Body of pancreas (tissue), 4 donors: ENCODE measurements at regions of chr7 and their contacts with region 1.

Region 1: DNA sequence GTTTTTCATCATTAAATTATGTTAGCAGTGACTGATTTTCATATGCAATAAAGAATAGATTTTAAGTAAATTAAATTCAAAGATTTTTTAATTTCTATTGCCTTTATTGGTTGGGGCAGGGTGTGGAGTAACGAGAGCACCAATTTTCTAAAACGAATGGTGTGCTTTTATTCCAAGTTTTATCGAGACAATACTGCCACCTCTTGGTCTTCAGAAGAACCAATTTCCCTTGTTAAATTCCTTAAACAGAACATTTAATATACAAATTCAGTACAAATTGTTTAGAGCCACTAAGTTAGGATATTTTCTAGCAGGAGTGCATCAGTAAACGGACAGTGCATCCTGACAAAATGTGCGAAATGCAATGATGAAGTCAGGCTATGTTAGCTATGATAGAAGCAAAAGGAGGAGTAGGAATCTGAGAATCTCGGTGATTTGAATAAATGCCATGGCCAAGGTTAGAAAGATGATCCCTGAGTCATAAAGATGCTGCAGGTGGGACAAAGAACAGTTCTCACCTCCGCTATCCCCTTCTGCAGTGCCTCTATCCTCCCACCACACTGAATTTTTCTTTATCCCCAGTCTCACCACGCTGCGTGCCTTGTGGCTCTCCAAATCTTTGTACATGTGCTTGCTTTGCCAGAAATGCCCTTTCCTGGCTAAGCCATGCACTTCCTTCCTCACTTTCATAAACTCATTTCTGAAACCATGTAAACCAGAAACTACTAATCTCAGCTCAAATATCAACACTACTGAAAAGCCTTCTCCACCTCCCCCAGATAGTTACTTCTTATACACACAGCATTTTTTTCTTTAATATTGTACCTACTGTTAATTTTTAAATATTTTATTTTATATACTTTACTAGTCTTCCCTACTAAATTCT is 31.9 kb upstream of the AGBL3 start:
- DNase-seq: no peak
- ATAC-seq: no peak
- H3K4me3 ChIP-seq: no peak overlapping the region
- H3K27ac ChIP-seq: no peak overlapping the region
- H3K4me1 ChIP-seq: no peaks in the 10 kb centered on the region
- H3K27me3 ChIP-seq: no peaks in the 10 kb centered on the region
- CTCF ChIP-seq: peak; percentile 23 to 77 (median 68)
- POLR2A ChIP-seq: no peak

Region 2: DNA sequence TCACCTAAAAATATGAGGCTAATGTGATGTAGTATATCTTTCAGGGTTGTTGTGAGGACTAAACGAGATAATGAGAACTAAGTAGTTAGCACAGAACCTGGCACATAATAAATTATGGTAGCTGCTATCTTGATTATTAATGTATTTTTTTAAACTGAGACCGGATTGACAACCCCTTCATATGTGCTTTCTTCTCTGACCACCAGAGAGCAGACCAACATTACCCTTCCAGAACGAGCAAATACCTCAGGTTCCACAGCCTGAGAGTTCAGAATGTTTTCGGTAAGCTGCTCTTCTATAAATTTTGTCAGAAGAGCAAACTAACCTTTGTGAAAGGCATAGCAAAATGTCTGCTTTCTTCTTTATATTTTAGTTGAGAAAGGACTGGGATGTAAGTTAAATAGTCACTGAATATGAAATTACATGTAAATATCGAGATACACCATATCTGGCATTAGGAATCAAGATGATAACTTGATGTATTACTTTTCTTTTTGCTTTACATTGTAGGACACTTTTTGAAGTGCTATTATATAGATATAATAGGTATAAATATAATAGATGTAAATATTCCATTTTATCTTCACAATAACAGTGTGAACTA is 321.4 kb before region 1 on chr7:
- intact Hi-C with region 1: loop called (anchors 5 kb)
- DNase-seq: peak in 3 of 4 donors; percentile 14 to 37 (median 15)
- ATAC-seq: peak; percentile 63
- H3K4me3 ChIP-seq: no peak overlapping the region
- H3K27ac ChIP-seq: no peak overlapping the region
- H3K4me1 ChIP-seq: no peaks in the 10 kb centered on the region
- H3K27me3 ChIP-seq: no peaks in the 10 kb centered on the region
- CTCF ChIP-seq: peak; percentile 5 to 70 (median 61)
- POLR2A ChIP-seq: no peak

Region 3: DNA sequence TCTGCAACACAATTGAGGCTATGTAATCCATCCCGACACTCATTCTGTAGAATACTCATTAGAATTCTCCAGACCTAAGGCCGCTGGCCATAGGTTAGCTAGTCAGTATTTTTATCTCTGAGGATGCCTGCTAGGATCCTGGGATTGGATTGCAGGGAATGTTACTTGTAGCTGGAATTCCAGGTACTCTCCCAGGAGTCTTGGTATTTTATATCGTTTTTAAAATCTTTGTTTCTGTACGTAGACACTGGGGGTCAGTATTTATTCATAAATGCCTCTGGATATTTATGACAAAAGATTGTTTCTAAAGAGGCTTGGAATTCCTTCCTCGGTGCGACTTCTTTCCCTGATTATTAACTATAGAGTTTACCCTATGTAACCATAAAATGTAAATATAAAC is 267.7 kb before region 1 on chr7:
- intact Hi-C with region 1: loop called (anchors 10 kb)
- DNase-seq: no peak
- ATAC-seq: no peak
- H3K4me3 ChIP-seq: no peak overlapping the region
- H3K27ac ChIP-seq: no peak overlapping the region
- H3K4me1 ChIP-seq: no peaks in the 10 kb centered on the region
- H3K27me3 ChIP-seq: no peaks in the 10 kb centered on the region
- CTCF ChIP-seq: peak in 4 of 7 experiments; percentile 35 to 53 (median 44)
- POLR2A ChIP-seq: no peak

Region 4: GRCh38 chr7:134750083-134751062 is 204.1 kb before region 1 on chr7:
- intact Hi-C with region 1: loop called (anchors 5 kb)
- DNase-seq: peak; percentile 23 to 51 (median 42)
- ATAC-seq: peak; percentile 21
- H3K4me3 ChIP-seq: no peak overlapping the region
- H3K27ac ChIP-seq: no peak overlapping the region
- H3K4me1 ChIP-seq: no peaks in the 10 kb centered on the region
- H3K27me3 ChIP-seq: no peaks in the 10 kb centered on the region
- CTCF ChIP-seq: peak; percentile 30 to 47 (median 37)
- POLR2A ChIP-seq: no peak